ENCODE measurements at regions of chr2 and their contacts with region 1.

Region 1: GRCh38 chr2:196361606-196362326 is 190.4 kb upstream of the STK17B start:
- DNase-seq: peak in 1 of 2 donors; percentile 41
- ATAC-seq: peak; percentile 53 to 89 (median 78)
- H3K4me3 ChIP-seq: peak overlapping the region in 9 of 10 donors; percentile 21 to 57 (median 42)
- H3K27ac ChIP-seq: peak overlapping the region; percentile 36 to 74 (median 52)
- H3K4me1 ChIP-seq: peaks cover 3 to 49% (median 14%) of the 10 kb centered on the region in 9 donors
- H3K27me3 ChIP-seq: no peaks in the 10 kb centered on the region
- CTCF ChIP-seq: no peak

Region 2: GRCh38 chr2:196399722-196400691 is 38.2 kb after region 1 on chr2:
- intact Hi-C with region 1: loop called in 2 of 10 experiments (anchors 5 kb)
- DNase-seq: peak in 1 of 2 donors; percentile 41
- ATAC-seq: peak; percentile 76 to 92 (median 86)
- H3K4me3 ChIP-seq: peak overlapping the region in 1 of 10 donors; percentile 12
- H3K27ac ChIP-seq: peak overlapping the region in 9 of 10 donors; percentile 41 to 80 (median 67)
- H3K4me1 ChIP-seq: peaks cover 7 to 61% (median 46%) of the 10 kb centered on the region in 9 donors
- H3K27me3 ChIP-seq: no peaks in the 10 kb centered on the region
- CTCF ChIP-seq: no peak

Region 3: DNA sequence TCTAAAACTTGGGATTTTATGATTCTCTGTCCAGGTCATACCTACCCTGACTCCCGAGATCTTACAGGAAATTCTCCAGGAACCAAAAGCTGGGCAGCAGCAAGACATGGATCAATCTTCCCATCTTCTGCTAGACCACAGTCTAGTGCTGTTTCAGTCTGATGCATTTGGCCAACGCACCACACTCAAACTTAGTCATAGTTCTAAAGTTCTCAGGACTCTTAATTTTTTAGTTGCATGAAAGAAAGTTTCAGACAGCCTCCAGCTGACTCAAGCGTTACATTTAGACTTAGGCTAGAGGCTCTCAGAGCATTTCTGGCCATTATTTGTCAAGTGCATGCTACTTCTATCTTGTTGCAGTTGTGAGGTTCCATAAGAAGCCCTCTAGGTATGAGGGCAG is 47.6 kb after region 1 on chr2:
- intact Hi-C with region 1: loop called in 2 of 10 experiments (anchors 5 kb)
- DNase-seq: no peak
- ATAC-seq: no peak
- H3K4me3 ChIP-seq: no peak overlapping the region
- H3K27ac ChIP-seq: no peak overlapping the region
- H3K4me1 ChIP-seq: peaks cover 0 to 60% (median 24%) of the 10 kb centered on the region in 9 donors
- H3K27me3 ChIP-seq: no peaks in the 10 kb centered on the region
- CTCF ChIP-seq: no peak

Region 4: DNA sequence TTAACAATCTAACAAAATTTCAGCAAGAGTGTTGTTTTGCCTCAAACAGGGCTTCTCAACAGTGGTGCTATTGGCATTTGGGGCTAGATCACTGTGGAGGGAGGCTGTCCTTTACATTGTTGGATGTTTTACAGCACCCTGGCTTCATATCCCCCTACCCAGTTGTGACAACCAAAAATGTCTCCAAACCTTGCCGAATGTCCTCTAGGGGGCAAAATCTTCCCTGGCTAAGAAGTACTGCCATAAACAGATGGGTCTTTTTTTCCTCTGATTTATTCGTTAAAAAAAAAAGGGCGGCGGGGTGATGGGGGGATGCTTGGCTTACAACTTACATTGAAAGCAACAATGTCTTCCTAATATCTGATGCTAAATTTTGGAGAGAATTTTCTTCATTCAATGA is 70.2 kb after region 1 on chr2:
- intact Hi-C with region 1: loop called in 2 of 10 experiments (anchors 5 kb)
- DNase-seq: no peak
- ATAC-seq: no peak
- H3K4me3 ChIP-seq: no peak overlapping the region
- H3K27ac ChIP-seq: peak overlapping the region in 1 of 10 donors; percentile 6
- H3K4me1 ChIP-seq: peaks cover 0 to 75% (median 32%) of the 10 kb centered on the region in 9 donors
- H3K27me3 ChIP-seq: no peaks in the 10 kb centered on the region
- CTCF ChIP-seq: peak in 7 of 9 donors; percentile 19 to 49 (median 27)

Measured in heart right ventricle (tissue), 16 donors.